SK-N-SH (cell line): ENCODE measurements at regions of chr12 and their contacts with region 1.

Region 1: GRCh38 chr12:6764011-6764828 is 1.9 kb upstream of the PTMS start:
- DNase-seq: peak; percentile 88
- H3K4me3 ChIP-seq: peak overlapping the region; percentile 26 to 47
- H3K27ac ChIP-seq: peak overlapping the region; percentile 87 to 99
- H3K4me1 ChIP-seq: peaks cover 20 to 37% of the 10 kb centered on the region in 2 experiments
- H3K27me3 ChIP-seq: no peaks in the 10 kb centered on the region
- CTCF ChIP-seq: no peak
- EP300 ChIP-seq: peak; percentile 50 to 83; a peak in 3 of 4 replicates
- RAD21 ChIP-seq: no peak

Region 2: DNA sequence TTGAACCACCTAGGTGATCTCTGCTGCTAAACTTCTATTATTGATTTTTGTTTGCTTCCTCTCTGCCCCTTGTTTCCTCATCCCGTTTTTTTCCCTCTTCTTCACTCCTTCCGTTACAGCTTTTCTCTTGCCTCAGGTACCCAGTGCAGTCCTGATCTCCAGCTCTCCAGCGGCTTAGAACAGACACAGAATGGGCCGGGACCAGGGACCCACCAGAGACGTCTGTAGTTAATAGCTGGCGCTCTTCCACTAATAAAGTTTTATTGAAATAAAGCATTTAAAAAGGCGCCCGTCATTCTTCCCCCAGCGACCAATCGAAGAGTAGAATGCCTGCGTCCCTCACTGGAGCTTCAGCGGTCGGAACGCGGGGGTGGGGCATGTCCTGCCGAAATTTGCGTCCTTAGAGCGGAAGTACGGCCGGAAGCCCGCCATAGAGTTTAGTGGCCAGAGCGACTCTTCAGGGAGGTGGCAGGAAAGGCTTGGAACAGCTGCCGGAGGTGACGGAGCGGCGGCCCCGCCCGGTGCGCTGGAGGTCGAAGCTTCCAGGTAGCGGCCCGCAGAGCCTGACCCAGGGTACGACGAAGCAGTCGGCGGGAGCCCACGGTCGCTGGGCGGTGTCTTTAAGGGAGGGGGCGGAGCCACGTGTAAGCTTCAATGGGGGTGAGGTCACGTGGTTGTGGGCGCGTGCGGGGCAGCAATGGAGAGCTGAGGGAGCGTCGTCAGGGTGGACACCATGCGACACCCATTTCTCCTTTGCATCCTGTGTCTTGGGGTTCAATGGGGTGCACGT is 40.4 kb before region 1 on chr12 and contains the start of gene COPS7A:
- CTCF ChIA-PET with region 1: interaction called, 10 read pairs
- POLR2A ChIA-PET with region 1: interaction called, 13 read pairs
- DNase-seq: peak; percentile 96
- H3K4me3 ChIP-seq: peak within 1 kb of the TSS; percentile 57 to 65
- H3K27ac ChIP-seq: peak within 1 kb of the TSS; percentile 84 to 87
- H3K4me1 ChIP-seq: peaks cover 0 to 9% of the 10 kb centered on the region in 2 experiments; a peak in 1 of 4 replicates
- H3K27me3 ChIP-seq: no peaks in the 10 kb centered on the region
- CTCF ChIP-seq: no peak
- EP300 ChIP-seq: no peak
- RAD21 ChIP-seq: no peak
- polyA plus RNA-seq, gene COPS7A: 191 and 231 TPM in 2 replicates

Region 3: DNA sequence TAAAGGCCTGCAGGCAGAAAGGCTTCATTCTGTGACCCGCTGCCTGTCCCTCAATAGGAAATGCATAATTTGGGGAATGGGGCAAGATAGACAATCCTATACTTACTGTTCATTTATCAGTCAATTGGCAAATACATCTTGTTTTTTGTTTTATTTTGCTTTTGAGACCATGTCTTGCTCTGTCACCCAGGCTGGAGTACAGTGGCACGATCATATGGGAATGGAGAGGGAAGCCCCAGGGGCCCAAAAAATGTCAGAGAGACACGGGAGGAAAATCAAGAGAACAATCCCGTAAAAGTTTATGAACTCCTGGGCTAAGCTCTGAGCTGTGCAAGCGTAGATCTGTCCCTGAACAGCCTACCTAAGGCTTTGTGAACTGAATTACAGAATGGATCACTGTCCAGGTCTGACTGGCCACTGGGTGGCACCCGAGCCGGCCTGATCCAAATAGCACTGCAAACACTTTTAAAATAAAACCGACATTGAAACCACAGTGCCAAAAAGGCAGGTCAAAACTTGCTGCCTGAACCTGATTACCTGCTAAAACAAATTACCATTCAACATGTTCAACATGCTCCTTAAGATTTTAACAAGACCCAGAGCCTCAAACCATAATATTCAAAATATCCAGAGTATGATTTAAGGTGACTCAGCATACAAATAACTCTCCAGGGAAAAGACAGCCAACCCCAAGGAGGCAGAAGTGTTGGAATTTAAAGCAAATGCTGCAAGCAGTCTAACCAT is 28.6 kb before region 1 on chr12:
- CTCF ChIA-PET with region 1: interaction called, 11 read pairs
- POLR2A ChIA-PET with region 1: interaction called, 4 read pairs
- DNase-seq: peak; percentile 76
- H3K4me3 ChIP-seq: no peak overlapping the region
- H3K27ac ChIP-seq: peak overlapping the region; percentile 39 to 50; a peak in 3 of 4 replicates
- H3K4me1 ChIP-seq: peaks cover 0 to 6% of the 10 kb centered on the region in 2 experiments; a peak in 1 of 4 replicates
- H3K27me3 ChIP-seq: no peaks in the 10 kb centered on the region
- CTCF ChIP-seq: peak; percentile 81
- EP300 ChIP-seq: no peak
- RAD21 ChIP-seq: peak; percentile 84

Region 4: DNA sequence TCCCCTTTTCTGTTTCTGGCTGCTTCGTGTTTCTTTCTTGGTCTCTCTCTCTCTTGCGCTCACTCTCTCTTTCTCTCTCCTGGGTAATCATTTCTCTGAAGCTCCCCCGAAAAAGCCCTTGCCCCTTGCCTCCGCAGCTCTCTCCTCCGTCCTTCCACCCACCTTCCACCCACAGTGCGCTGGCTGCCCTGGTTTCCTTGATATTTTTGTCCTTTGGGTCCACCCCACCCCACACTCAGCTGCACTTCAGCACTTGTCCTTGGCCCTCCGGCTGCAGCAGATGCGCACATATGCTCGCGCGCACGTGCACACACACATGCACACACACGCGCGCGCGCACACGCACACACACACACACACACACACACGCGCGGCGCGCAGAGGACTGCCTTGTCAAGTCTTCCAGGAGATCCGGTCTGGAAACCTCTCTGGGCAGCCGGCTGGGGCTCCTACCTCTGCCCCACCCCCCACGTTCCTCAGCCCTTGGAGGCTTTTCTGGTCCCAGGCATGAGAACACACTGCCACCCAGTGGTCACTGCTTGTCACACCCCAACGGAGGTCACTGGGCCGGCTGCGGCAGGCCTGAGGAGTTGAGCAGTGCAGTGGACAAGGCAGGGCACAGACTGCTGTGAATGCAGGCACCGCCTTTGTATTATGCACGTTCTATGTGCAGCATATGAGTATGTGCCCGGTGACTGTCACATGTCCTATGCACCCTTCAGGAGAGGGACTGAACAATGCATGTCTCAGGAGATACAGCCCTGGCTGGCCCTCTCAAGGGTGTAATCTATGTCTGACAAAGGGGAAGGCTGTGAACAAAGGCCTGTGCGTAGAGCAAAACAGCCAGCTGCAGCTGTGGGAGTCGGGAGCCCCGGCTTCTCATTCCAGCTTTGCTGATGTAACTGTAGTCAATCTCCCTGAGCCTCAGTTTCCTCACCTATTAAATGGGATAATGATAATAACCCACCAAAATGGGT is 14.6 kb after region 1 on chr12:
- CTCF ChIA-PET with region 1: interaction called, 343 read pairs
- POLR2A ChIA-PET with region 1: interaction called, 31 read pairs
- DNase-seq: peak; percentile 94
- H3K4me3 ChIP-seq: peak overlapping the region; percentile 10 to 59; a peak in 3 of 4 replicates
- H3K27ac ChIP-seq: peak overlapping the region; percentile 18 to 52; a peak in 3 of 4 replicates
- H3K4me1 ChIP-seq: peaks cover 0 to 8% of the 10 kb centered on the region in 2 experiments; a peak in 1 of 4 replicates
- H3K27me3 ChIP-seq: no peaks in the 10 kb centered on the region
- CTCF ChIP-seq: peak; percentile 91
- EP300 ChIP-seq: peak in 1 of 2 experiments; percentile 45; a peak in 1 of 4 replicates
- RAD21 ChIP-seq: peak; percentile 99

Region 5: DNA sequence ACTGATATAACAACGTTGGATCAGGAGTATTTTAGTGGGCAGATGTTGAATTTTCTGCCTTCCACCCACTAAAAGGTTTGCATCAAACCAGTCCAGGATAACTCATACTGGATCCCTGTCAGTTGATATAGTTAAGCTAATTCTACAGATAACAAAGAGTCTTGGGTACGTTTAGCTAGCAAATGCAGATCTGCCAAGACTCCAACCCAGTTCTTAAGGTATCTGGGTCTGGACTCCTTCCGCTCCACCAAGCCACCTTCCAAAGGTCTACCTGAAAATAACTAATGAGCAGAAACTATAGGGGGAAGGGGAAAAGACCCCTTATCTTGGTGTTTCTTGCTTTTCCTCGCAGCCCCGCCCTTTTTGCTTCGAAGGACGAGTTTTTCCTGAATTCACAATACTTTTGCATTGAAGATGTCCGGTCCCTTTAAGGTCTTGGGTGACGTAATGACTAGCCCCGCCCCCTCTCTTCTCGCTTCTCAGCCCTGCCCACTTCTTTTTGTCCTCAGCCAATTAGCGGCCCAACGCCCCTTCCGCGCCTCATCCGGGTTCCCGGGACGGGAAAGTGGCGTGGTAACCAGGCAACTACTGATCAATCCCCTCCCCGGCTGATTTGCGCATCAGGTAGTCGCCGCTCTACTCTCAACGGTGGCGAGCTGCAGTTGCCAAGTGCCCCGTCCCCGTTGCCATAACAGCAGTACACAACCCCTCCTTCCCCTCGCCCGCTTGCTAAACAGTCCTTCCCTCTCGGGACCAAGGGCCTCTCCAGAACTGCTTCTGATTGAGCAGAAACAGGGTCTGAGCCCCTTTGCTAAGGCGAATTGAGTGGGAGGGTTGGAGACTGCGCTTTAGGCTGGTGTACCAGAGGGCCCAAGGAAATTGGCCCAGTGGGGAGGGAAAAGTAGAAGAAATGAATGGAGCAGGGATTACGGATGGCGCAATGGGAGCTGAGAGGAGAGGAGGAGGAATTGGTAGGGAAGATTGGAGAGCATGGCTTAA is 140.4 kb after region 1 on chr12 and contains the start of gene LRRC23:
- CTCF ChIA-PET with region 1: no interaction called
- POLR2A ChIA-PET with region 1: no interaction called
- DNase-seq: peak; percentile 88
- H3K4me3 ChIP-seq: peak within 1 kb of the TSS; percentile 72 to 98
- H3K27ac ChIP-seq: peak within 1 kb of the TSS; percentile 71 to 78
- H3K4me1 ChIP-seq: peaks cover 9 to 10% of the 10 kb centered on the region in 2 experiments; a peak in 2 of 4 replicates
- H3K27me3 ChIP-seq: no peaks in the 10 kb centered on the region
- CTCF ChIP-seq: no peak
- EP300 ChIP-seq: no peak
- RAD21 ChIP-seq: no peak
- polyA plus RNA-seq, gene LRRC23: 11.9 TPM in 2 replicates